ENCODE measurements at regions of chr1 and their contacts with region 1.

Region 1: DNA sequence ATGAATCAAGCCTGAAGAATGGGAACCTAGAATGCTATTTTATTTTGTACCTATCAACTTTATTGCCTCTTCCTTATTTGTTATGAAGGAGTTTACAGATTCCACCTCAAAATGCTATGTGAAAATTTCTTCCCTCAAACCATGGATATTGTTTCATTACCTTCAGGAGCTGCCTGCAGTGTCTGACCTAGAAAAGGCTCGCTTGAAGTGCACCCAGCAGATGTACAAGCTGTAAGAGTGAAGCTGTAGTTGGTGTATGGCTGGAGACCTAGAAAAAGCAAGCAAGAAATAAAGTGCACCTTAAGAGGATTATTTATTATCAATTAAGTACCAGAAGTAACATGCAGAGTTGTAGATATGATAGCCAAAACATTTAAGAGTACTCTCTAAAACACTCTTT is 199.4 kb downstream of the KCTD3 start:
- DNase-seq: no peak
- ATAC-seq: no peak
- H3K4me3 ChIP-seq: no peak overlapping the region
- H3K27ac ChIP-seq: no peak overlapping the region
- H3K4me1 ChIP-seq: no peaks in the 10 kb centered on the region
- H3K27me3 ChIP-seq: peaks cover 60% of the 10 kb centered on the region
- CTCF ChIP-seq: no peak

Region 2: DNA sequence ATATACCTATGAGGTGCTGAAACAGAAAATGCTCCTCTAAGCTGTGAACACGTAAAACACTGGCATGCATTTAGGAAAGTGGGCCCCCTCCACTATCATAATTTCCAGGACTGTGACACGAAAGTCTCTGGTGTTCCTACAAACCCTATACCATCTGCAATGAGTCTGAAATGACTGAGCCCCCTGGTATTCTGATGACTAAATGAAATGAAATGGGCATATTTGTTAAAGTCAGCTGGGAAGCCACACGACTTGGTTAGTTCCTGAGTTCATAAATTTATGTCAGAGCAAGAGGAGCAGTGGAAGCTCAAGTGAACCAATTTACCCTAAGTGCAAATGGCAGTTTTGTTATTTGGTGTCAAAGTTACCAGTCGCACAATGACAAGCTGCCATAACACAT is 17.1 kb before region 1 on chr1:
- CTCF ChIA-PET with region 1: no interaction called
- POLR2A ChIA-PET with region 1: no interaction called
- intact Hi-C with region 1: loop called (anchors 2 kb)
- DNase-seq: peak; percentile 93
- ATAC-seq: peak; percentile 94
- H3K4me3 ChIP-seq: no peak overlapping the region
- H3K27ac ChIP-seq: no peak overlapping the region
- H3K4me1 ChIP-seq: peaks cover 17% of the 10 kb centered on the region
- H3K27me3 ChIP-seq: no peaks in the 10 kb centered on the region
- CTCF ChIP-seq: no peak

Region 3: DNA sequence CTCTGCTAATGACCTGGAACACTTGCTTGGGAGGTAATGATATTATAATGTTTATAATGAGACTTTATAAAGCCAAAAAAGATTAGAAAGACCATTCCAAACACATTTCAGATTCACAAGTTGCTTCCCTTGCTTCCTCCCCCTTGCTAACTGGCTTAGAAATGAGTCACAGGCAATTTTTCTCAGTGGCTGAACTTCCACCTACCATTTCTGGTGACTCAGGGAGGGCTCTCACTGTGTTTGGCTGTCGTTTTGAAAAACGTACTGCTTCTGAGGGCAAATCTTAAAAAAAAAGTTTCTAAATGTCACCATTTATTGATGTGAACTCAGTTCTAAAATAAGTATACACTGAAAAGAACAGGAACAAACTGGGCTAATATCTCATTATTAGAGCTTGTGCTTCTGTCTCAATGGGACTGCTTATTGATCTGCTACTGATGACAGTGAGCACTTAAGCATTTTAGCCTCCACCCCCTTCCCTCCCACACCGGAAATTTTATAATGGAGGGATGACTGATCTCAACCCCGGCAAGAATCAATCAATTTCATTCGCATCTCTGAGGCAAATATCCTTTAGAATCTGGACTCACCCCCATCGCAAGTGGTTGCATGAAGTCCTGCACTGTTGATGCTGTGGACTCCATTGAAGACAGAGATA is 78.8 kb after region 1 on chr1:
- CTCF ChIA-PET with region 1: no interaction called
- POLR2A ChIA-PET with region 1: no interaction called
- intact Hi-C with region 1: no loop called
- DNase-seq: peak; percentile 94
- ATAC-seq: peak; percentile 96
- H3K4me3 ChIP-seq: peak overlapping the region; percentile 29
- H3K27ac ChIP-seq: peak overlapping the region; percentile 26
- H3K4me1 ChIP-seq: peaks cover 20% of the 10 kb centered on the region
- H3K27me3 ChIP-seq: no peaks in the 10 kb centered on the region
- CTCF ChIP-seq: no peak